ENCODE measurements at regions of chr3 and their contacts with region 1.

Region 1: DNA sequence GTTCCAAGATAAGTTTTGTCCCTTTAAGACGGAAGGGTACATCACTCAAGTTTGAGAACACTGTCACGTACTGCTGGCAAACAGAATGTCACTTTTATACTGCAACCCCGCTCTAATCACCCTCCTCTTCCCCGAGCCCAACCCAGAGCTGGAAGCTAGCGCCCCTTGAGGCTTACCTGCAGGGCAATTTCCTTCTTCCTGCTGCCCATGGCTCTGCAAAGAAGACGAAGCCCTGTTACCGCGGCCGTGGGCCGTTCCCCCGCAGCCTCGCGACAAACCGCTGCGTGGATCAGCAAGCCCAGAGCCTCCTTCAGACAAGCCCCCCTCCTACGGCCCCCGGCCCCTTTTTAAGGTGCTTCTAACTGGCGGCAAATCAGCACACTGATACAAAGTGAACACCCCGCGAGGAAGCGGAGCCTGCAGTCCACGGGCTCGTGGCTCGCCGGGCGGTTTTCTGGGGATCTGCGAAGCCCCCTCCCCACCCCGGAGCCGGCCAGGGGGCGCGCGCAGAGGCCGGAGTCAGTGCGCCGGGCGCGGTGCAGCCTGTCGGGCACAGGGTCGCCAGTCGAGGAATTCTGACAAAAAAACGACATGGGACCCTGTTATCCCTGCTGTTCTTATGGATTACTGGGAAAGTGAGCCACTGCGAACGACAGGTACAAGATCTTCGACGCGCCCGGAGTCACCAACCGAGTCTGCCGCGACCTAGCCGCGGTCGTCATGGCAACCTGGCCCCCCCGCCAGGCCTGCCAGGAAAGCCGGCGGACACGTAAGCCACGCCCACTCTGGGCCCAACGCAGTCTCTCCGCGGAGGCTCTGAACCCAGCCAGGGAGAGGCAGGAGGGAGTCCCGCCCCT is at the start of gene NME9:
- DNase-seq: peak; percentile 79 to 91 (median 86)
- ATAC-seq: peak; percentile 95
- H3K4me3 ChIP-seq: peak within 1 kb of the TSS; percentile 78
- H3K4me3 Mint-ChIP-seq: peak within 1 kb of the TSS; percentile 91 to 99 (median 97)
- H3K27ac ChIP-seq: peak within 1 kb of the TSS; percentile 86
- H3K27ac Mint-ChIP-seq: peak within 1 kb of the TSS; percentile 85 to 98 (median 94)
- H3K4me1 ChIP-seq: peaks cover 5 to 8% of the 10 kb centered on the region in 2 donors
- H3K4me1 Mint-ChIP-seq: peaks cover 12 to 40% (median 36%) of the 10 kb centered on the region in 7 donors
- H3K27me3 ChIP-seq: no peaks in the 10 kb centered on the region
- H3K27me3 Mint-ChIP-seq: peaks cover 0 to 10% (median 0%) of the 10 kb centered on the region in 5 donors
- total RNA-seq, gene NME9: 0.69 to 2.0 (median 1.2) TPM in 4 of 5 experiments, not detected in the other

Region 2: GRCh38 chr3:138174421-138175122 is 154.8 kb before region 1 on chr3 and contains the start of gene DBR1:
- CTCF ChIA-PET with region 1: interaction called, 3 read pairs
- POLR2A ChIA-PET with region 1: interaction called, 3 read pairs
- intact Hi-C with region 1: loop called (anchors 1 kb)
- DNase-seq: peak; percentile 51 to 81 (median 74)
- ATAC-seq: peak; percentile 91
- H3K4me3 ChIP-seq: peak within 1 kb of the TSS; percentile 79
- H3K4me3 Mint-ChIP-seq: peak within 1 kb of the TSS; percentile 87 to 99 (median 98)
- H3K27ac ChIP-seq: peak within 1 kb of the TSS; percentile 80
- H3K27ac Mint-ChIP-seq: peak within 1 kb of the TSS; percentile 96 to 99 (median 97)
- H3K4me1 ChIP-seq: peaks cover 20 to 22% of the 10 kb centered on the region in 2 donors
- H3K4me1 Mint-ChIP-seq: peaks cover 22 to 56% (median 45%) of the 10 kb centered on the region in 7 donors
- H3K27me3 ChIP-seq: no peaks in the 10 kb centered on the region
- H3K27me3 Mint-ChIP-seq: peaks cover 0 to 9% (median 0%) of the 10 kb centered on the region in 5 donors
- total RNA-seq, gene DBR1: 15.4 to 28.2 (median 20.8) TPM

Region 3: DNA sequence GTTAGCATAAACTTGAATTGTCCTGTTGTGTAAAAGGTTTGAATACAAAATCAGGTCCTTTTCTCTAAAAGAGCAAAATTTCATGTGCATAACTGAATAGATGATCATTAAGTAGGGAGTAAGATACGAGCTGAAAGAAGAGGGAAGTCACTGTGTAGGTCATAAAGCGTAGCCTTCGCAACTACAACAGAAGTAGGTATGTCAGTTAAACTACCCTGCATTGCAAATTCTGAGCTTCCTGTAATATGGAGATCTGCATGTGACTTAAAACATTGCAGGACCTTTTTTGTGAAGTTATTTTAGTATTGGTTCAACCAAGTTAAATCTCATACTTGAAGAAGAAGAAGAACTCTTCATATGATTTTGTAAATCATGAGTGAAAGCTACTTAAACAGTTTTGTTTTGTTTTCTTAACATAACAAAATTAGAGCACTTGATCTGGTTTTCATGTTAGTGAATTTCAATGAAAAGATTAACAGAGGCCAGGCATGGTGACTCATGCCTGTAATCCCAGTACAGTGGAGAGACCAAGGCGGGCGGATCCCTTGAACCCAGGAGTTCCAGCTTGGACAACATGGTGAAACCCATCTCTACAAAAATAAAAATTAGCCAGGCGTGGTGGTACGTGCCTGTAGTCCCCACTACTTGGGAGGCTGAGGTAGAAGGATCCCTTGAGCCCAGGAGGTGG is 115.8 kb before region 1 on chr3:
- CTCF ChIA-PET with region 1: no interaction called
- POLR2A ChIA-PET with region 1: no interaction called
- intact Hi-C with region 1: no loop called
- DNase-seq: no peak
- ATAC-seq: peak; percentile 45
- H3K4me3 ChIP-seq: no peak overlapping the region
- H3K4me3 Mint-ChIP-seq: no peak overlapping the region
- H3K27ac ChIP-seq: no peak overlapping the region
- H3K27ac Mint-ChIP-seq: peak overlapping the region in 1 of 9 donors; percentile 19
- H3K4me1 ChIP-seq: no peaks in the 10 kb centered on the region
- H3K4me1 Mint-ChIP-seq: peaks cover 7 to 59% (median 28%) of the 10 kb centered on the region in 7 donors
- H3K27me3 ChIP-seq: no peaks in the 10 kb centered on the region
- H3K27me3 Mint-ChIP-seq: no peaks in the 10 kb centered on the region

Region 4: DNA sequence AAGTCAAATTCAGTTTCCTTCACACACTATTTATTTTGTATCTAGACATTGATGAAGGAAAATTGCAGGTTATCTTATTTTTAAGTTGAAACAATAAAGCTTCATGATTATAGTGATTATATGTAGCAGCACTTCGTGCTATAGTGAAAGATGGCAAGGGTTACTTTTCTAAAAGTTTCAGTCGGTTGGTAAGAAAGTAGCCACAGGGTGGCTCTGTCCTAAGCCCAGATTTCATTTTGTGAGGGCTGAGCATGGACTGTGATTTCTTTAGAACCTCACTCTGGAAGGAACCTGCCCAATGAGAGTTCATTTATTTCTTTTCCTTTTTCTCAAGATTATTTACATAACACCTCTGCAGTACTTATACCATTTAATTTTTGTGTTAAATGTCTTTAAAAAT is 66.3 kb before region 1 on chr3:
- CTCF ChIA-PET with region 1: interaction called, 3 read pairs
- POLR2A ChIA-PET with region 1: no interaction called
- intact Hi-C with region 1: loop called in 1 of 2 experiments (anchors 1 kb)
- DNase-seq: no peak
- ATAC-seq: no peak
- H3K4me3 ChIP-seq: no peak overlapping the region
- H3K4me3 Mint-ChIP-seq: no peak overlapping the region
- H3K27ac ChIP-seq: no peak overlapping the region
- H3K27ac Mint-ChIP-seq: peak overlapping the region in 1 of 9 donors; percentile 43
- H3K4me1 ChIP-seq: no peaks in the 10 kb centered on the region
- H3K4me1 Mint-ChIP-seq: peaks cover 0 to 16% (median 0%) of the 10 kb centered on the region in 7 donors
- H3K27me3 ChIP-seq: no peaks in the 10 kb centered on the region
- H3K27me3 Mint-ChIP-seq: no peaks in the 10 kb centered on the region

Region 5: GRCh38 chr3:138417559-138417982 is 88.2 kb after region 1 on chr3:
- CTCF ChIA-PET with region 1: no interaction called
- POLR2A ChIA-PET with region 1: no interaction called
- intact Hi-C with region 1: loop called in 1 of 2 experiments (anchors 1 kb)
- DNase-seq: peak; percentile 8 to 60 (median 47)
- ATAC-seq: peak; percentile 74
- H3K4me3 ChIP-seq: no peak overlapping the region
- H3K4me3 Mint-ChIP-seq: no peak overlapping the region
- H3K27ac ChIP-seq: no peak overlapping the region
- H3K27ac Mint-ChIP-seq: no peak overlapping the region
- H3K4me1 ChIP-seq: no peaks in the 10 kb centered on the region
- H3K4me1 Mint-ChIP-seq: peaks cover 0 to 7% (median 0%) of the 10 kb centered on the region in 7 donors
- H3K27me3 ChIP-seq: no peaks in the 10 kb centered on the region
- H3K27me3 Mint-ChIP-seq: peaks cover 12 to 28% (median 19%) of the 10 kb centered on the region in 5 donors

Region 6: DNA sequence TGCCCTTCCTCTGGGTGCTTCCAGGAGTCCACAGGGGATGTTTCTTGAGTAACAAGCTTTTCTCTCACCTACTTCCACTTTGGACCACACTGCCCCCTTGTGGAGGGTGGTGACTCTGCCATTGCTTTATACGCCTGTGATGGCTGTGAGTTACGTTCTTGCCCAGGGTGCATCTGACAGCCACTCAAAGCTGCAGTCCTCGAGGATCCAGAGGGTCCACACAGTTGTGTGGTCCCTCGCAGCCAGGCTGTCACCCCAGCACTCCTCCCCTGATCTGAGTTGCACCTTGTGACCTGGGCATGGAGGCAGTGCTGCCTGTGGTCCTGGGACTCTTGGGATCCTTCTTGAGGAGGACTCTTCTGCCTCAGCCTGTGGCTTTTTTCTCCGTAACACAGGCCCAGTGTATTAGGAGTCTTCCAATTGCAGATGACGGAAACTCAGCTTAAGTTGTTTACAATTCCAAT is 594.2 kb after region 1 on chr3:
- CTCF ChIA-PET with region 1: no interaction called
- POLR2A ChIA-PET with region 1: no interaction called
- intact Hi-C with region 1: loop called in 1 of 2 experiments (anchors 5 kb)
- DNase-seq: peak; percentile 65 to 86 (median 77)
- ATAC-seq: peak; percentile 96
- H3K4me3 ChIP-seq: no peak overlapping the region
- H3K4me3 Mint-ChIP-seq: no peak overlapping the region
- H3K27ac ChIP-seq: no peak overlapping the region
- H3K27ac Mint-ChIP-seq: peak overlapping the region in 1 of 9 donors; percentile 35
- H3K4me1 ChIP-seq: no peaks in the 10 kb centered on the region
- H3K4me1 Mint-ChIP-seq: peaks cover 0 to 5% (median 0%) of the 10 kb centered on the region in 7 donors
- H3K27me3 ChIP-seq: no peaks in the 10 kb centered on the region
- H3K27me3 Mint-ChIP-seq: peaks cover 0 to 13% (median 4%) of the 10 kb centered on the region in 5 donors

Measured in naive thymus-derived CD4-positive, alpha-beta T cell (primary cell).